ENCODE measurements at regions of chr9 and their contacts with region 1.

Region 1: DNA sequence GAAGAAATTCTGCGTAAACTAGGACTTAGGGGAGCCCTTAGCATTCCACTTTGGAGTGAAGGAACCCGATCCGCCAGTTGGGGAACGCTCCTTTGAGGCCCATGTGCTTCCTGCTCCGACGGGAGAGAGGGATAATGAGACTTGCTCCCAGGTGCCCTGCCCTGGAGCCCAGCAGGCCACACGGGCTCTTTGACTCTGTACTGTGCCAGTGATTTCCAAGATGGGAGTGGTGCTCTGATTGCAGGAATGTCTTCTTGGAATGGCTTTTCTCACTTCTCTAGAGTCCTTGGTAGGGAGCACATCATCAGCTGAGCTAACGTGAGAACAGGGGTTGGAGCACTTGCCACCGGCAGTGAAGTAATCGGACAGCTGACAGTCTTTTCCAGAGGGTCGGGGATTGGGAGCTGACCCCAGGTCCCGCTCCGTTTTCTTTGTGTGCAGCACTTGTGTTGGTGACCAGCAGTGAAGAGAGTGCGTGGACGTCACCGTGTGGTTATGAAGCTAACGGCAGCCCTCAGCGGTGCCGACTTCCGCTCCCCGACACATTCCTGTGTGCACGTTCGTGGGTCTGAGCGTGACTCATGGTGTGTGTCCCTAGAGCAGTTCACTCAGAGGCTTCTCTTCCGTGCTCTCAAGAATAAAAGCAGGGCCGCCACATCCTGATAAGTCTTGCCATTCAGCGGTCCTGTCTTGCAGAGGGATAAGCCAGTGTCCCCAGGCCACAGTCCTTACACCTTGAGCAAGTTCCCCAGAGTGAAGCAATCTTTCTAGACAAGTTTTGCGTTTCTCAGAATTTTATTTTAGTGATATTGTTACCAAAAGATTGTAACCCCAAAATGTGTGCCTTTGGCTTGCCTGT is 25.6 kb downstream of the ABL1 start:
- DNase-seq: peak; percentile 74 to 82
- ATAC-seq: peak; percentile 83 to 88
- H3K4me3 ChIP-seq: peak overlapping the region in 2 of 4 donors; percentile 1 to 17
- H3K27ac ChIP-seq: peak overlapping the region; percentile 60 to 76 (median 70)
- H3K4me1 ChIP-seq: peaks cover 19 to 38% of the 10 kb centered on the region in 2 donors
- H3K27me3 ChIP-seq: no peaks in the 10 kb centered on the region
- CTCF ChIP-seq: peak in 3 of 5 experiments; percentile 31 to 46 (median 38)
- POLR2A ChIP-seq: peak; percentile 5 to 27

Region 2: DNA sequence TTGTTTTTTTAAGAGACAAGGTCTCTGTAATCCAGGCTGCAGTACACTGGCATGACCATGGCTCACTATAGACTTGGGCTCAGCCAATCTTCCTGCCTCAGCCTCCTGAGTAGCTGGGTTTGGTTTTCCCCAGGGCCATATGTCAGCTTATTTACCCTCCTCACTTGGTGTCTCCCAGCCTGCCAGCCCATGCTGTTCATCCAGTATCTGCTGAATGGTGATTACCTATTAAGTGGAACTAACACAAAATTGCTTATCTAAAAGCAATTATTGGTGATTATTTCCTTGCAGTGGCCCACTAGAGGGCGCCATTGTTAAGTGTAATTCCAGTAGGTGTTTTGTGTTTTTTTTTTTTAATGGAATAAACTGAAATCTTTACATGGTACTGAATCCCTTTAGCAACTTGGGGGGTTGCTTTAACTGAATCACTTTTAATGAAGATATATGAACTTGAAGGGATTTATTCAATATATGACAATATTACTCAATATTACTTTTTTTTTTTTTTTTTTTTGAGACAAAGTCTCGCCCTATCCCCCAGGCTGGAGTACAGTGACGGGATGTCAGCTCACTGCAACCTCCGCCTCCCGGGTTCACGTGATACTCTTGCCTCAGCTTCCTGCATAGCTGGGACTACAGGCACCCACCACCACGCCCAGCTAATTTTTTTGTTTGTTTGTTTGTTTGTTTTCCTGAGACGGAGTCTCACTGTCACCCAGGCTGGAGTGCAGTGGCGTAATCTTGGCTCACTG is 153.3 kb before region 1 on chr9:
- in situ Hi-C with region 1: loop called (anchors 5 to 10 kb)
- intact Hi-C with region 1: loop called (anchors 2 kb)
- DNase-seq: no peak
- ATAC-seq: peak; percentile 24 to 25
- H3K4me3 ChIP-seq: no peak overlapping the region
- H3K27ac ChIP-seq: no peak overlapping the region
- H3K4me1 ChIP-seq: peaks cover 0 to 3% of the 10 kb centered on the region in 2 donors
- H3K27me3 ChIP-seq: no peaks in the 10 kb centered on the region
- CTCF ChIP-seq: peak; percentile 63 to 84 (median 69)
- POLR2A ChIP-seq: no peak

Region 3: DNA sequence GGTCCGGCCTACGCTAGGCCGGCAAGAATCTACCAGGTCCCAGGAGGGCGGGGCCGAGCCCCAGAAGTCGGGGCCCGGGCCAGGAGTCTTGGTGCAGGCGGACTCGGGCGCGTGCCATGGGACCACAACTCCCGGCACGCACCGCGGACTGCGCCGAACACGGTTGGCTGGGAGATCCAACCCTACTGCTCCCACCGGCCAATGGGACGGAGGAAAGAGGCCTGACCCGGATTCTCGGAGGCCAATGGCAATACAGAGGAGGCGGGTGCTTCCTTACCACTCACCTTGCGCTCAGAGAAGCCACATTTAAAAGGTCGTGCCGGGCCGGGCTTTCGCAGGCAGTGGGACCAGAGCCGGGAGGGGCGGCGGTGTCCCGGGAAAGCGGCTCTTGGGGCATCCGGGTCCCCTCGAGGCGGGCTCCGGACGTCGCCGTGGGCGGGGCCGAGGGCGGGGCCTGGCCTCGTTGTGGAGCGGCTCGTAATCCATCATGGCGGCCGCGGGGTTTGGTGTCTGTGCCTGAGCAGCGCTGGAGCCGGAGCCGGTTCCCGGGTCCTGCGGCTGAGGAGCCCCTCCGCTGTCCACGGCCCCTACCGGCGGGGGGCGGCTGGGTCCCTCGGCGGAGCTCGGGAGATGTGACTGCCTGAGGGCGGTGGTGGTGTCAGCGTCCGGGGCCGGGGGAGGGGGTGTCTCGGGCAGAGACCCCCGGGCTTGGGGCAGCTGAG is 148.0 kb before region 1 on chr9:
- in situ Hi-C with region 1: loop called (anchors 5 to 10 kb)
- intact Hi-C with region 1: loop called (anchors 2 kb)
- DNase-seq: peak; percentile 98 to 99
- ATAC-seq: peak; percentile 99
- H3K4me3 ChIP-seq: peak overlapping the region; percentile 90
- H3K27ac ChIP-seq: peak overlapping the region; percentile 95 to 99 (median 98)
- H3K4me1 ChIP-seq: peaks cover 24 to 26% of the 10 kb centered on the region in 2 donors
- H3K27me3 ChIP-seq: no peaks in the 10 kb centered on the region
- CTCF ChIP-seq: peak in 1 of 5 experiments; percentile 25
- POLR2A ChIP-seq: peak; percentile 56 to 85

Region 4: DNA sequence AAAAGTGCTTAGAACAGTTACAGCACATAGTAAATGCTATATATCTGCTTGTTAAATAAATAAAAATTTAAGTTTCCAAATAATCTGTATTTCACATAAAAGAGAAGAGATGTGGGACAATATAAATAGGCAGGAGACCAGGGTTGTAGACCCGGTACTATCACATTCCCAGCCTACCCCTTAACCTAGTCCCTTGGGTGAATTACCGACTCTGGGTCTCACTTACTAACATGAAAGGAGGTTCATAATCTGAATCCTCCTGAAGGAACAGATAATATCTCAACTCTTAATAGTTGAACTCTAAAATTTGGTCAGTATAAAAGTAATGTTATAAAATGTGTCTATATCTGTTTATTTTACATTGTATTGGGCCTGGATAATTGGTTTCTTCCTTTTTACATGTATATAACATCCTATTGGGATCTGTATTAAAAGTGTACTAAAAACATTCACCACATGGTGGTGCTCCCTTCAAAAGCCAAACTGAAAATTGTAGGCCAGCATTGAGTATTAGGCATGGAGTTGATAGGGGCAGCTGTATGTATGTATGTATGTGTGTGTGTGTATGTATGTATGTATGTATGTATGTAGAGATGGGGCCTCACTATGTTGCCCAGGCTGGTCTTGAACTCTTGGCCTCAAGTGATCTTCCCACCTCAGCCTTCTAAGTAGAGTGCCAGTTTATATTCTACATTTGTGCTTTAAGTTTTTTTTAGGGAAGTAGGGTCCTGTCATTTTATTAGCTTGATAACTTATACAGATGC is 89.8 kb before region 1 on chr9:
- in situ Hi-C with region 1: loop called (anchors 5 kb)
- intact Hi-C with region 1: loop called (anchors 1 kb)
- DNase-seq: no peak
- ATAC-seq: peak; percentile 74 to 77
- H3K4me3 ChIP-seq: no peak overlapping the region
- H3K27ac ChIP-seq: no peak overlapping the region
- H3K4me1 ChIP-seq: peaks cover 10 to 15% of the 10 kb centered on the region in 2 donors
- H3K27me3 ChIP-seq: no peaks in the 10 kb centered on the region
- CTCF ChIP-seq: peak; percentile 58 to 67 (median 60)
- POLR2A ChIP-seq: no peak

Region 5: GRCh38 chr9:130780865-130781504 is 79.7 kb before region 1 on chr9:
- in situ Hi-C with region 1: no loop called
- intact Hi-C with region 1: loop called (anchors 2 kb)
- DNase-seq: peak; percentile 61 to 75
- ATAC-seq: peak; percentile 89 to 90
- H3K4me3 ChIP-seq: peak overlapping the region in 3 of 4 donors; percentile 9 to 33 (median 12)
- H3K27ac ChIP-seq: peak overlapping the region; percentile 58 to 75 (median 72)
- H3K4me1 ChIP-seq: peaks cover 37 to 41% of the 10 kb centered on the region in 2 donors
- H3K27me3 ChIP-seq: no peaks in the 10 kb centered on the region
- CTCF ChIP-seq: no peak
- POLR2A ChIP-seq: peak; percentile 46 to 78

Region 6: DNA sequence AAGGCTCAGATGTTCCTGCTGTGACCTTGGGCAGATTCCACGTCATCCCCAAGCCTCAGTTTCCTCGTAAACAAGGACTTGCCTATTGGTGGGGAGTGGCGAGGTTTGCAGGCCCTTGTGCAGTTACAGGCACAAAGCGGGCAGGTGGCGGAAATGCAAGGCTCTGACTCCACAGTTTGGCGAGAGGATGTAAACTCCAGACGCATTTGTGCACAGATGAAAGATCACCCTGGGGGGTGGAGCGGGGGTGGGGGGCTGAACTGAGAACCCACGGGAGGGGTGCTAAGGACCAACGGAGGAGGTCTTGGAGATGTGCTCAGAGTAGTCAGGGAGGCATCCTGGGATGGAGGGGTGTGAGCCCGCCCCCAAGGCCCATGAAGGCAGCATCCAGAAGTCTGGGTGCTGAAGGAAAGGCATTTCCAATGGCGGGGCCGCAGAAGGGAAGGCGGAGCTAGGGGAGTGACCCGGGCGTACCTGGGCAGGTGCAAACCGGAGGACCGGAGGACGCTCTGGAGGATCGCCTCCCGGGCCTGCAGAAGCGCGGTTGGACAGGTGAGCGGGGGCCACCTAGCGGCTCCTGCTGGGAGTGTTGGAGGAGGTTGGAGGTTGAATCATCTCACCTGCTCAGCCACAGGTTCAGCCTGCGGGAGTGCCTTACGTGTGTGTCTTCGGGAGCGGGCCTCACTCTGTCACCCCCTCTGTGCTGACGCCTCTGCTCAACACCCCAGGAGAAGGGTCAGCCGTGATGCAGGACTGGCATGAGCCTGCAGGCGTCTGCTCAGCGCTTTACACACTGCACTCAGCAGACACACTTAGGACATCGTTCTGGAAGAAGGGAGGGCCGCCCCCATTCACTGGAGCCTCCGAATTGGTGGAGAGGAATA is 80.2 kb after region 1 on chr9:
- in situ Hi-C with region 1: no loop called
- intact Hi-C with region 1: no loop called
- DNase-seq: peak; percentile 28 to 37
- ATAC-seq: peak; percentile 65 to 79
- H3K4me3 ChIP-seq: no peak overlapping the region
- H3K27ac ChIP-seq: no peak overlapping the region
- H3K4me1 ChIP-seq: peaks cover 0 to 7% of the 10 kb centered on the region in 2 donors
- H3K27me3 ChIP-seq: peaks cover 48 to 70% (median 67%) of the 10 kb centered on the region in 3 donors
- CTCF ChIP-seq: peak; percentile 59 to 85 (median 80)
- POLR2A ChIP-seq: no peak

Measured in gastrocnemius medialis (tissue), 4 donors.